CD8-positive, alpha-beta memory T cell (primary cell): ENCODE measurements at regions of chr6 and their contacts with region 1.

Region 1: GRCh38 chr6:10478187-10479040 is 42.7 kb upstream of the GCNT2 start:
- DNase-seq: peak in 1 of 5 donors; percentile 11
- H3K4me3 ChIP-seq: no peak overlapping the region
- H3K4me3 Mint-ChIP-seq: no peak overlapping the region
- H3K27ac ChIP-seq: no peak overlapping the region
- H3K27ac Mint-ChIP-seq: no peak overlapping the region
- H3K4me1 ChIP-seq: no peaks in the 10 kb centered on the region
- H3K4me1 Mint-ChIP-seq: no peaks in the 10 kb centered on the region
- H3K27me3 ChIP-seq: no peaks in the 10 kb centered on the region
- H3K27me3 Mint-ChIP-seq: peaks cover 12 to 39% of the 10 kb centered on the region in 2 donors

Region 2: GRCh38 chr6:10794239-10794638 is 315.8 kb after region 1 on chr6:
- CTCF ChIA-PET with region 1: interaction called, 13 read pairs
- POLR2A ChIA-PET with region 1: interaction called, 3 read pairs
- DNase-seq: no peak
- H3K4me3 ChIP-seq: no peak overlapping the region
- H3K4me3 Mint-ChIP-seq: no peak overlapping the region
- H3K27ac ChIP-seq: no peak overlapping the region
- H3K27ac Mint-ChIP-seq: peak overlapping the region in 1 of 8 donors; percentile 74
- H3K4me1 ChIP-seq: no peaks in the 10 kb centered on the region
- H3K4me1 Mint-ChIP-seq: peaks cover 3 to 9% (median 8%) of the 10 kb centered on the region in 3 donors
- H3K27me3 ChIP-seq: no peaks in the 10 kb centered on the region
- H3K27me3 Mint-ChIP-seq: peaks cover 0 to 2% of the 10 kb centered on the region in 2 donors

Region 3: DNA sequence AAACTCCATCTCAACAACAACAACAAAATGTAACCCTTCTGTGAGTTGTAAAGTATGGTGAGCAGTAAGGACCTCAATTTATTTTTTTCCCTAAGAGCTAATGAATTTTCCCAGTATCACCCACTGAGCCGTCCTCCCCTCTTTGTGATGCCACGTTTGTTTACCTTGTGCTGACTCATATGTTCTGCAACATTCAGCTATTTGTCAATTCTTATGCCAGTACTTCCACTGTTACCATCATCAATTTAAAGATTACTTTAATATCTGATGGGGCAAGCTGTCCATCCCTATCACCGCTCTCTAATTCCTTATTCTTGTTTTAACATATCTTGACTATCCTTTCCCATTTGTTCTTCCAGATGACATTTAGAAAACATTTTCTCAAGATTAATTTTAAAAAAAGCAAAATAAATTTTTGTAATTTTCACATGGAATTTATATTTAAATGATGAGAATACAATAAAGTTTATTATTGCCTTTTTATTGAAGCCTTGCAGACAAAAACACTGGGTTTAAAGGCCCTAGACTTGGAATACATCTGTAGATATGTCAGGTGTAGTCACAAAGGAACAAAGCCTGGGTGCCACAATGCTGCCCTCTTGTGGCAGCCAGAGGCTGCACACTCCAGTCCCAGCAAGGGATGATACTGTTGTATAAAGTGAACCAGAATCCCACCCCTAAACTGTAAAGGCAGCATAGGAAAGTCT is 322.6 kb after region 1 on chr6:
- CTCF ChIA-PET with region 1: interaction called, 47 read pairs
- POLR2A ChIA-PET with region 1: interaction called, 3 read pairs
- DNase-seq: peak; percentile 30 to 76 (median 42)
- H3K4me3 ChIP-seq: no peak overlapping the region
- H3K4me3 Mint-ChIP-seq: no peak overlapping the region
- H3K27ac ChIP-seq: no peak overlapping the region
- H3K27ac Mint-ChIP-seq: no peak overlapping the region
- H3K4me1 ChIP-seq: no peaks in the 10 kb centered on the region
- H3K4me1 Mint-ChIP-seq: no peaks in the 10 kb centered on the region
- H3K27me3 ChIP-seq: no peaks in the 10 kb centered on the region
- H3K27me3 Mint-ChIP-seq: peaks cover 0 to 2% of the 10 kb centered on the region in 2 donors

Region 4: DNA sequence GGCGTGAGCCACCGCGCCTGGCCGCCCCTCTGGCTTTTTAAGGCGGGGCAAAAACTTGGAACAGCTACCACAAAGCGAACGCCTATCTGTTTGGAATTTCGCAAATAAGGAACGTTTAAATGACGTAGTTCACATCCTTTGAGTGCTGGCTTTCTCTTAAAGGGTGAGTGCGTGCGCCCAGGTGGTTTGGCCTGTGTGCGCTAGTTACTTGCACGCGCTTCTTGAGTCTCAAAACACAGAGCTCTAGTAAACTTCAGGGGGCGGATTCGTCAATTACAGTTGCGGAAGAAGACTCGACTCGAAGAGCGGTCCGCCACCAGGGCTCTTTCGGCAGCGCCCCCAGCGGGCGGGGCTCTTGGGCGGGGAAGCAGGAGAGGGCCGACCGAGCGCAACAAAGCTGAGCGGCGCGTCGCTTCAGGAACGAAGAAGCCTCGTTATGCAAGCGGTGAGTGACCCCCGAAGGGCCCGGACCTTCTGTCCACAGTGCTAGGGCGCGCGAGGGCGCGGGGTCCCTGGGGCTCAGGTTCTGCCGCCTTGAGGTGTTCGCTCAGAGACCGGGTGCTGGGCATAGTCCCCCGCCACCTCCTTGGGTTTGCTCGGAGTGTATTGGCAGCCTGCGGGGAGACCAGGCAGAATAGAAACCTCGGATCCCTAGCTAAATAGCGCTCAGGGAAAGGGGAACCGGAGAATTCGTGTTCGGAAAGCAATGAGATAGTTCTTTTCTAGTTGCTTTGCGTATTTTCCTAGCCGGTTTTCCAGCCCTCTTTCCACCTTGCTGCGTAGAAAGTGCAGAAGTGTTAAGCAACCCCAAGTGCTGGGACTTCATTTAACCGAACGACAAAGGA is 408.5 kb after region 1 on chr6 and contains the start of gene SYCP2L:
- CTCF ChIA-PET with region 1: no interaction called
- POLR2A ChIA-PET with region 1: no interaction called
- DNase-seq: peak in 1 of 5 donors; percentile 1
- H3K4me3 ChIP-seq: no peak within 1 kb of the TSS
- H3K4me3 Mint-ChIP-seq: peak within 1 kb of the TSS in 5 of 7 donors; percentile 49 to 77 (median 61)
- H3K27ac ChIP-seq: peak within 1 kb of the TSS; percentile 64
- H3K27ac Mint-ChIP-seq: peak within 1 kb of the TSS in 2 of 8 donors; percentile 15 to 64
- H3K4me1 ChIP-seq: no peaks in the 10 kb centered on the region
- H3K4me1 Mint-ChIP-seq: peaks cover 4 to 18% (median 13%) of the 10 kb centered on the region in 3 donors
- H3K27me3 ChIP-seq: peaks cover 5% of the 10 kb centered on the region
- H3K27me3 Mint-ChIP-seq: peaks cover 56 to 78% of the 10 kb centered on the region in 2 donors
- total RNA-seq, gene SYCP2L: not detected

Region 5: GRCh38 chr6:11064836-11065235 is 586.4 kb after region 1 on chr6:
- CTCF ChIA-PET with region 1: interaction called, 17 read pairs
- POLR2A ChIA-PET with region 1: no interaction called
- DNase-seq: no peak
- H3K4me3 ChIP-seq: no peak overlapping the region
- H3K4me3 Mint-ChIP-seq: no peak overlapping the region
- H3K27ac ChIP-seq: no peak overlapping the region
- H3K27ac Mint-ChIP-seq: no peak overlapping the region
- H3K4me1 ChIP-seq: no peaks in the 10 kb centered on the region
- H3K4me1 Mint-ChIP-seq: no peaks in the 10 kb centered on the region
- H3K27me3 ChIP-seq: no peaks in the 10 kb centered on the region
- H3K27me3 Mint-ChIP-seq: peaks cover 11 to 31% of the 10 kb centered on the region in 2 donors